ENCODE measurements at regions of chr19 and their contacts with region 1.

Region 1: GRCh38 chr19:8355631-8356402 is 8.1 kb upstream of the ANGPTL4 start:
- DNase-seq: no peak
- ATAC-seq: no peak
- H3K4me3 Mint-ChIP-seq: no peak overlapping the region
- H3K27ac Mint-ChIP-seq: no peak overlapping the region
- H3K4me1 Mint-ChIP-seq: peaks cover 6% of the 10 kb centered on the region
- H3K27me3 Mint-ChIP-seq: peaks cover 9% of the 10 kb centered on the region

Region 2: DNA sequence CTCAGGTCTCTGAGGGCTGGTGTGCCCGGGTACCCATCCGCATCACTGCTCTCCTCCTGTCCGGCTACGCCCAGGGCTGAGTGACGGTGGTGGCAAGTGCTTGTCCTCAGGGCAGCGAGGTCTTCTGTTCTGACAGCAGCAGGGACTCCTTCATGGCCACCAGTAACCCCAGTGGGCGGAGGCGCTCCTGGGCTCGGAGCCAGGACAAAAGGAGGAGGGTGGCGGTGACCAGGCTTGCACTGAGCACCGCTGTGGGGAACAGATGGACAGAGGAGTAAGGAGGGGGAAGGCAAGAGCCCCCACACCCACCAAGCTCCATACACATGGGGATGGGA is 53.5 kb before region 1 on chr19:
- CTCF ChIA-PET with region 1: no interaction called
- POLR2A ChIA-PET with region 1: no interaction called
- intact Hi-C with region 1: no loop called
- DNase-seq: no peak
- ATAC-seq: no peak
- H3K4me3 Mint-ChIP-seq: no peak overlapping the region
- H3K27ac Mint-ChIP-seq: no peak overlapping the region
- H3K4me1 Mint-ChIP-seq: peaks cover 17% of the 10 kb centered on the region
- H3K27me3 Mint-ChIP-seq: no peaks in the 10 kb centered on the region

Region 3: GRCh38 chr19:8377598-8377997 is 21.8 kb after region 1 on chr19:
- CTCF ChIA-PET with region 1: interaction called, 10 read pairs
- POLR2A ChIA-PET with region 1: no interaction called
- intact Hi-C with region 1: no loop called
- DNase-seq: no peak
- ATAC-seq: no peak
- H3K4me3 Mint-ChIP-seq: no peak overlapping the region
- H3K27ac Mint-ChIP-seq: no peak overlapping the region
- H3K4me1 Mint-ChIP-seq: peaks cover 8% of the 10 kb centered on the region
- H3K27me3 Mint-ChIP-seq: no peaks in the 10 kb centered on the region

Region 4: DNA sequence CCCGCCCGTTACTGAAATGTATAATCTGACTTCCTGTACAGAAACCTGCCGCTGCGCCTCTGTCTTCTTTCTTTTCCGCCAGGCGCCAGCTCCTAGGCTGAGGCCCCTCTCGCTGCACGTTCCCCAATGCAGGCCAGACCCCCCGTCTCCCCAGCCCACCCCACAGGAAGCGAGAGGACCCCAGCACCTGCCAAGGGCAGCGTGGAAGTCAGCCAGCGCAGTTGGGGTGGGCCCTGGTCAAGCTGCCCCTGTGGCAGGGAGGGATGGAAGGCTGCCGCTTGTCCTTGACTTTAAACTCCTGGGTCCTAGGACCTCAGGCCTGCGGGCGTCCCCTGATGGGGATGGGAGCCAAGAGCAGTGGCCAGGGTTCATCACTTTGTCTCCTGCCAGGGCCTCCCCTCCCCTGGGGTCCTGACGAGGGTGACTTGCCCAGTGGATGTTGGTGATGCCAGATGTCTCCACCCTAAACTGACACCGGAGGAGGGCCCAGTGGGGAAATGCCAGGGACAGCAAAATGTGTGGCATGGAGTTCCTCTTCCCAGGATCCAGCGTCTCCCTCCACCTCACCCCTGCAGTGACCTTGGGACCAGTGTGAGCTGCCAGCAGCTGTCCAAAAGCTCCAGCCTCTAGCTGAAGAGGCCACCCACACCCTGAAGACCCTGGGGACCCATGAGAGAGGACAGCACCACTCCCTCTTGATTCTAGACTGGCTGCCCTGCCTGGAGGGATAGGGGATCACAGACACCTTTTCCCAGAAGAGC is 48.8 kb after region 1 on chr19:
- CTCF ChIA-PET with region 1: interaction called, 14 read pairs
- POLR2A ChIA-PET with region 1: no interaction called
- intact Hi-C with region 1: no loop called
- DNase-seq: no peak
- ATAC-seq: no peak
- H3K4me3 Mint-ChIP-seq: no peak overlapping the region
- H3K27ac Mint-ChIP-seq: no peak overlapping the region
- H3K4me1 Mint-ChIP-seq: no peaks in the 10 kb centered on the region
- H3K27me3 Mint-ChIP-seq: no peaks in the 10 kb centered on the region

Region 5: DNA sequence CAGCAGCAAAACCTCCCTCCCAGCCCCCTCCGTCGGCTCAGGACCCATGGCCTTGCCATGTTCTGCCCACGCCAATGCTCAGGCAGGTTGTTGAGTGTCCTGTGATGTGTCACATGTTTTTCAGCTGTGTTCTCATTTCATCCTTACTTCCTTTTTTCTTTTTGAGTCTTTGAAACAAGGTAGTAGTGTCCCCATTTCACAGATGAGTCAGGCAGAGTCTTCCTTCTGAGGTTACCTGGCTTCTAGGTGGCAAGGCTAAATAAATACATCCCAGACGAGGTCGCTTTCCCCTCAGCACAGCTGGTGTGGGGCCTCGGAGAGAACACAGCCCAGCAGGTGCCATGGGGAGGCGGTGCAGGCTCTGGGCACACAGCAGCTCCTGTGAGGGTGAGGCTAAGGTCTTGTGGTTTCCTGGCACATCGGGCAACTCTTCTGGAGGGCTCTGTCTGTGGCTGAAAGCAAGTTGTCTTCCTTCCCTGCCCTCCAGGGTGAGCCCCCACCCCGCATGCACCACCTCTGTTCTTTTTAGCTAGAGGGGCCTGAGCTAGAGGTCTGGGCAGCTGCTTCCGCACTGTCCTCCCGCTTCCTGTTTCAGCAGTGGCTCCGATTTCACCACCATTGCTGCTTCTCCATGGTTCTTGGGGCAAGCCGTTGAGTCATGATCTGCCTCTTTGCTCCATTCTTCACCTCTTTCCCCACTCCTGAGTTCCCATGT is 131.5 kb after region 1 on chr19:
- CTCF ChIA-PET with region 1: interaction called, 10 read pairs
- POLR2A ChIA-PET with region 1: no interaction called
- intact Hi-C with region 1: no loop called
- DNase-seq: peak; percentile 85
- ATAC-seq: peak; percentile 90
- H3K4me3 Mint-ChIP-seq: no peak overlapping the region
- H3K27ac Mint-ChIP-seq: peak overlapping the region; percentile 95
- H3K4me1 Mint-ChIP-seq: peaks cover 38% of the 10 kb centered on the region
- H3K27me3 Mint-ChIP-seq: no peaks in the 10 kb centered on the region